ENCODE measurements at regions of chr5 and their contacts with region 1.

Region 1: GRCh38 chr5:83553000-83553486 is 81.5 kb downstream of the VCAN start:
- DNase-seq: no peak
- ATAC-seq: no peak
- H3K4me3 ChIP-seq: no peak overlapping the region
- H3K27ac ChIP-seq: no peak overlapping the region
- H3K4me1 ChIP-seq: no peaks in the 10 kb centered on the region; the same call in 1 of the 2 replicates
- H3K27me3 ChIP-seq: no peaks in the 10 kb centered on the region
- CTCF ChIP-seq: no peak
- EP300 ChIP-seq: no peak
- POLR2A ChIP-seq: no peak
- RAD21 ChIP-seq: no peak

Region 2: GRCh38 chr5:82785882-82786509 is 767.0 kb before region 1 on chr5:
- CTCF ChIA-PET with region 1: no interaction called
- POLR2A ChIA-PET with region 1: no interaction called
- RAD21 ChIA-PET with region 1: no interaction called
- SMC1A ChIA-PET with region 1: no interaction called
- in situ Hi-C with region 1: no loop called
- intact Hi-C with region 1: loop called (anchors 10 kb)
- DNase-seq: no peak
- ATAC-seq: no peak
- H3K4me3 ChIP-seq: no peak overlapping the region
- H3K27ac ChIP-seq: no peak overlapping the region
- H3K4me1 ChIP-seq: no peaks in the 10 kb centered on the region
- H3K27me3 ChIP-seq: no peaks in the 10 kb centered on the region
- CTCF ChIP-seq: no peak
- EP300 ChIP-seq: no peak
- POLR2A ChIP-seq: no peak
- RAD21 ChIP-seq: no peak

Region 3: DNA sequence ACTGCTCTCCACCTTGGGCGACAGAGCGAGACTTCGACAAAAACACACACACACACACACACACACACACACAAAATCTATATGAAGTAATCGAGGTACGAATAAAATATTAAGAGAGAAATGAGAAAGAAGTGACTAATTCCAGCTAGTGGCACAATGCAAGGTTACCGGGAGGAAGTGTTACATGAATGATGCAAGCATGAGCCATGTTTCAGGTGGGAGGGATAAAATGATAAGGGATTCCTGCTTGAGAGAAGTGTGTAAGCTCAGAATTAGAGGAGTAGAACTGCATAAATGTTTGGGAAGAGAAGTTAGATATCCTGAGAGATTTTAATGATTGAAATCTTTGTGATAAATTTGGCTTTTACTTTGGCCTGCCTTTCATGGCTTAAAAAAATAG is 148.8 kb after region 1 on chr5:
- CTCF ChIA-PET with region 1: no interaction called
- POLR2A ChIA-PET with region 1: no interaction called
- RAD21 ChIA-PET with region 1: no interaction called
- SMC1A ChIA-PET with region 1: no interaction called
- in situ Hi-C with region 1: no loop called
- intact Hi-C with region 1: no loop called
- DNase-seq: no peak
- ATAC-seq: no peak
- H3K4me3 ChIP-seq: no peak overlapping the region
- H3K27ac ChIP-seq: no peak overlapping the region
- H3K4me1 ChIP-seq: no peaks in the 10 kb centered on the region
- H3K27me3 ChIP-seq: no peaks in the 10 kb centered on the region
- CTCF ChIP-seq: no peak
- EP300 ChIP-seq: no peak
- POLR2A ChIP-seq: no peak
- RAD21 ChIP-seq: no peak

Measured in GM12878 (cell line).